ENCODE measurements at regions of chr14 and their contacts with region 1.

Region 1: DNA sequence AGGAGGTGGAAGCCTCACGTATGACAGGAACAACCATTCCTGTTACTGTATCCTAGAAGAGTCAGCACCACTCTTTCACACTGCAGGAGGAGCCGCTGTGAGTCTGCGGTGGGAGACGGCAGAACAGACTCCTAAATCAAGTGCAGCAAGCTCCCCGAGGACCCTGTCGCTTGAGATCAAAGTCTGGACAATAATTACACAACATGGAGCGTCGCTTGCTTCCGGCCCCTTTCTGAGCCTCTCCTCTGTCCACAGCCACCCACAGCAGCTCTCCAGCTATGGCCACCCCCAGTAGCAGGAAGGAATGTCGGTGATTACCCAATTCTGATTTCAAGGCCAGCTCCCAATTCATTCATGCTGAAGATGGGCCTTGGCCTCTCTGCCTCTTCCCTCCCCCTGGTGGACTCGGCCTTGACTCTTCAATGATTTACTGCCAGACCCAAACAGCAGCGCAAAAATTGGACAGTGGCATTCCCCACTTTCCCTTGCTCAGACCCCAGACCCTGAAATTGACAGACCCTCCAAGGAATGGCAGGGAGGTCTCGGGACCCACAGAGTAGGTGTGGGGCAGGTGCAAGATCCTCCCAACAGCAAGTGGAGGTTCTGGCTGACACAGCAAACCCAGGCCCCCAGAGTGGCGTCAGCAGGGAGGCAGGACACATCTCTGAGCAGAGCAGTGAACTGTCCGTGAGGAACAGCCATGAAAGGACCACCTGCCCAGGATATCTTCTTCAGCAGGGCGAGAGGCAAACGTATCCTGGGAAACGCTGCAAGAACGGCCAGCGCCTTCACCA is 272.7 kb upstream of the DIO3 start:
- DNase-seq: peak in 4 of 5 donors; percentile 31 to 74 (median 58)
- H3K4me3 ChIP-seq: no peak overlapping the region
- H3K27ac ChIP-seq: no peak overlapping the region
- H3K4me1 ChIP-seq: peaks cover 3% of the 10 kb centered on the region
- H3K27me3 ChIP-seq: no peaks in the 10 kb centered on the region
- CTCF ChIP-seq: no peak
- EP300 ChIP-seq: no peak
- POLR2A ChIP-seq: no peak

Region 2: GRCh38 chr14:101359221-101360053 is 70.8 kb after region 1 on chr14:
- intact Hi-C with region 1: loop called in 1 of 4 experiments (anchors 5 kb)
- DNase-seq: peak; percentile 66 to 77 (median 71)
- H3K4me3 ChIP-seq: no peak overlapping the region
- H3K27ac ChIP-seq: peak overlapping the region; percentile 9 to 94
- H3K4me1 ChIP-seq: peaks cover 48% of the 10 kb centered on the region
- H3K27me3 ChIP-seq: no peaks in the 10 kb centered on the region
- CTCF ChIP-seq: no peak
- EP300 ChIP-seq: no peak
- POLR2A ChIP-seq: no peak

Region 3: GRCh38 chr14:102008891-102009290 is 720.3 kb after region 1 on chr14:
- intact Hi-C with region 1: no loop called
- DNase-seq: no peak
- H3K4me3 ChIP-seq: no peak overlapping the region
- H3K27ac ChIP-seq: no peak overlapping the region
- H3K4me1 ChIP-seq: no peaks in the 10 kb centered on the region
- H3K27me3 ChIP-seq: no peaks in the 10 kb centered on the region
- CTCF ChIP-seq: no peak
- EP300 ChIP-seq: no peak
- POLR2A ChIP-seq: no peak

Measured in ovary (tissue), 10 donors.